ENCODE measurements at regions of chr2 and their contacts with region 1.

Region 1: GRCh38 chr2:239098288-239098970 is 250.5 kb downstream of the TWIST2 start:
- DNase-seq: no peak
- H3K4me3 ChIP-seq: no peak overlapping the region
- H3K27ac ChIP-seq: peak overlapping the region in 1 of 2 experiments; percentile 83; a peak in 1 of 4 replicates
- H3K4me1 ChIP-seq: peaks cover 0 to 47% of the 10 kb centered on the region in 2 experiments; a peak in 1 of 4 replicates
- H3K27me3 ChIP-seq: no peaks in the 10 kb centered on the region
- CTCF ChIP-seq: no peak
- EP300 ChIP-seq: no peak
- RAD21 ChIP-seq: no peak

Region 2: DNA sequence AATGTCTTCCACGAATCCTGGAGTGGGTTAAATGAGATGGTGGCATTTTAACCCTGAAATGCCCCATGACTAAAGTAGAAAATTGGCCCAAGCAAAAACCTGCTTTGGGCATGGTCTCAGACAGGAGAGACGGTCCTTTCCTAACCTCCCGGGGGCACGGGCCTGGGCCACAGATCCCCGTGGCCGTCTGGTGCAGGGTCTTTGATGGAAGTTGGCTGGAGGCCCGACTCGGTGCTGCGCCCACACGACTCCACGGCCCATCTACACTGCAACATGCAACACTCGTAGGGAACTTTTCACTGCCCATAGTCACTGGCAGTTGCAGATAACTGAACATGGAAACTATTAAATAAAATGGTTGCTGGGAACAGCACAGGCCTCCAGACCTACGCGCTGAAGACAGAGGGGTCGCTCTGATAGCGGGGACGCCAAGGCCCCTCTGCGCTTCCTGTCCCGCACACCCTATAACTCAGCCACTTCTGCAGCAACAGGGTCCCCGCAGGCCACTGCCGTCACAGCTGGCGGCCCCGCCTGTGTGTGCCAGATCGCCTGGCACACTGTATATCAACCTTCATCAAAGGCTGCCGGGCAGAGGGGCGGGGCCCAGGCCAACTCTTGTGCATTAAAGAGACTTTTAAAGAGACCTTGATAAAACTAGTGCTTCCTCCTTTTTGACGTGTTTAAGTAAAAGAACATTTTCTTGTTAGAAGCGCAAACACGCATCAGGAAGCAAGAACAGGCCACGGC is 36.4 kb before region 1 on chr2:
- CTCF ChIA-PET with region 1: interaction called, 13 read pairs
- POLR2A ChIA-PET with region 1: interaction called, 5 read pairs
- DNase-seq: peak; percentile 85
- H3K4me3 ChIP-seq: no peak overlapping the region
- H3K27ac ChIP-seq: peak overlapping the region in 1 of 2 experiments; percentile 71; a peak in 2 of 4 replicates
- H3K4me1 ChIP-seq: peaks cover 0 to 42% of the 10 kb centered on the region in 2 experiments; a peak in 1 of 4 replicates
- H3K27me3 ChIP-seq: no peaks in the 10 kb centered on the region
- CTCF ChIP-seq: no peak
- EP300 ChIP-seq: peak in 1 of 2 experiments; percentile 59; a peak in 1 of 4 replicates
- RAD21 ChIP-seq: no peak